Posterior vena cava (tissue), 2 donors: ENCODE measurements at regions of chr2 and their contacts with region 1.

Region 1: GRCh38 chr2:73156539-73157124 is 43.9 kb upstream of the RAB11FIP5 start:
- DNase-seq: peak; percentile 90

Region 2: DNA sequence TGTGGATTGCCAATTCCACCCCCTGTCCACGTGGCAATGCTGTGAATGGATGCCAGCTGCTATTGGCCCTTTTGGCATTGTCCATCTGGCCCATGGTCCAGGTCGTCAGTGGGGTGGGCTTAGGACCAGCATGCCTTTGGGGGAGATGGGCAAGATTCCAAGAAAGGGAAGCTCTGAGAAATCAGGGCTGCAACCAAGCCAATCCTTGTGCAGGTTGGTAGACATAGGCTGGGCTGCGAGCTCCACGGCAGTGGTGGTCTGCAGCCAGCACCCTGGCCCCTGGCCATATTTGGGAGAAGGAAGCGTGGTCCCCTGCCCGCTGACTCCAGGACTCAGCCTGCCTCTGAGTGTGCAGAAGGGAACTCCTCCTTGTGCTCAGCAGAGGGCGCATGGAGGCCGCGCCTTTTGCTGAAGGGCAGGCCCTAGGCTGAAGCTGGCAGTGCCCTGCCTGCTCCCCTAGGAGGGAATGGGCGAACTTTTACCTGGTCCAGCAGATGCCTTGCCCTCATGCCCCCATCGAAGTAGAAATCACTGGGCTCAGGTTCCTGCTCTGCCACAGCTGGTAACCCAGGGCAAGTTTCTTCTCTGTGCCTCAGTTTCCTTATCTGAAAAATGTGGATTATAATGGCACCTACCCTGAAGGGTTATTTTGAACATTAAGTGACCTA is 264.0 kb before region 1 on chr2:
- intact Hi-C with region 1: loop called (anchors 5 to 10 kb)
- DNase-seq: peak; percentile 90

Region 3: DNA sequence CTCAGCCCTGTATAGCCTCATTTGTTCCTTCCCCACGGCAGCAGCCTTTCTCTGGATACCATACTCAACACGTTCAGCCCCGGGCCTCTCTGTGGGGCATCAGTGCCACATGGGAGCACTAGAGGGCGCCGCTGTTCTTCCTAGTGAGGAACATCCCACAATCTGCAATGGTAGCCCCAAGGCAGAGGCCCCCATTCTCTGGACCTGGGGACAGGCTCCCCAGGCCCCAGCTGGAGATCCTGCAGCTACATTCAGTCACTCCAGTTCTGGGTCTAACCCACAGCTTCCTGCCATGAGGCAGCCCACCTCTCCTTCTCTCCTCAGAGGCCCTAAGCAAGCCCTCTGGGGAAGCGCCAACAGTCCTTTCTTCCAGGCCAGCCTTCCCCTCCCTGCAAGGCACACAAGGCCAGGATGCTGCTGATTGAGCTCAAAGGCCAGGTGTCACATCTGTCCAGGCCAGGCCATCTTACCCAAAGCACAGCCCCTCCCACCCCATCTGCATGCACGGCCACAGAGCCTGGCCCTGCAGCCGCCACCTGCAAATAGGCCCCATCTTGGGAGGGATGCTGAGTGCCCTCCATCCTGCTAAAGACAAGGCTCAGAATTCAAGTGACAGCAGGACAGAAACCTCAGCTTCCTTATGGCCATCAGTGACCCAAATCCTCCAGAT is 70.8 kb before region 1 on chr2:
- intact Hi-C with region 1: loop called (anchors 2 to 5 kb)
- DNase-seq: peak; percentile 96

Region 4: DNA sequence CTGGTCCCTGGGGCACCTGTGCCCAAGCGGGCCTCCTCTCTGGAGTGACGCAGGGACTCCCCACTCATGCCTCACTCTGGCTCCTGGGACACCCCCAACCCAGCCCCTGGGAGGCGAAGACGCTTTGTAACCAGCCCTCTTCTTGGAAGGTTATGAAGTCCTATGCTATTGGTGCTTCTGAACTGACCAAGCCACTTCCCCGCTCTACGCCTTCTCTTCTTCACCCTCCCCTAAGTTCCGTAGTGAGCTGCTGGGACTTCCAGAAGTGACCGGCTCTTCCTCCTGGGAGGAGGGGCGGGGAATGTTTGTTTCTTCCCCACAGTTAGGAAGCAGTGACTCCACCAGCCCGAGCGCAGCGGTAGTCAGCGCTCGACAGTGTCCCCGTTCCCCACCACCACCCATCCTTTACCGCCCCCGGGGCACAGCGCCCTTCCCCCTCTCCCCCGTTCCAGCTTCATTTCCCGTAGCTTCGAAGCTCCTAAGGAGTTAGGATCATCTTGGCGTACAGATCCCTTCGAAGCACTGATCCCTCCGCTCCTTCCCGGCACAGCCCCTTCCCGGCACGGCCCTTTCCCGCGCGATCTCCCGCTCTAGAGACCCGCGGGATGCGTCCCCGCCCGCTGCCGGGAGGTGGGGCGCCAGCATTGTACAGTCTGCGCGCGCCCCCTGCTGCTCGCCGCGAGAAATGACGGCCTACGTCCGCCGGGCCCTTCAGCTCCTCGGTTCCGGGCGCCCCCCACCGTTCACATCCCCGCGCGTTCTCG is 20.4 kb after region 1 on chr2:
- intact Hi-C with region 1: loop called in 1 of 2 experiments (anchors 1 kb)
- DNase-seq: peak; percentile 98

Region 5: GRCh38 chr2:73812635-73813034 is 656.0 kb after region 1 on chr2:
- intact Hi-C with region 1: no loop called
- DNase-seq: no peak